CD8-positive, alpha-beta memory T cell (primary cell): ENCODE measurements at regions of chr9 and their contacts with region 1.

Region 1: DNA sequence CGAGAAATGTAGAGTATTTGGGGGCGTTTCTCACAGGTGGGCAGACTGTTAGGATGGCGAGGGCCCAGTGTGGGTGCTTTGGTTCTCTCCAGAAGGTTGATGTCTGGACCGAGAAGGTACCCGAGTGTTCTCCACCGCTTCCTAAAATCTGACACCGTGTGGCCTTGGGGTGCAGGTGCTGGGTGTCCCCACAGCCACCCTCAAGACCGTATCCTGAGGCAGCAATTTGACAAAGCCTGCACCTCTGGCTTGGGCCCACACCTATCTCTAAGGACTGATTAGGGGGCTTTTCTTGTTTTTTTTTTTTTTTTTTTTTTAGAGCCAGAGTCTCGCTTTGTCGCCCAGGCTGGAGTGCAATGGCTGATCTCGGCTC is 1.3 kb downstream of the PPP1R26 start:
- DNase-seq: no peak
- H3K4me3 ChIP-seq: peak overlapping the region; percentile 37
- H3K4me3 Mint-ChIP-seq: peak overlapping the region in 6 of 7 donors; percentile 52 to 75 (median 60)
- H3K27ac ChIP-seq: peak overlapping the region; percentile 47
- H3K27ac Mint-ChIP-seq: no peak overlapping the region
- H3K4me1 ChIP-seq: peaks cover 13% of the 10 kb centered on the region
- H3K4me1 Mint-ChIP-seq: peaks cover 5 to 24% (median 9%) of the 10 kb centered on the region in 3 donors
- H3K27me3 ChIP-seq: peaks cover 20% of the 10 kb centered on the region
- H3K27me3 Mint-ChIP-seq: peaks cover 45 to 48% of the 10 kb centered on the region in 2 donors

Region 2: DNA sequence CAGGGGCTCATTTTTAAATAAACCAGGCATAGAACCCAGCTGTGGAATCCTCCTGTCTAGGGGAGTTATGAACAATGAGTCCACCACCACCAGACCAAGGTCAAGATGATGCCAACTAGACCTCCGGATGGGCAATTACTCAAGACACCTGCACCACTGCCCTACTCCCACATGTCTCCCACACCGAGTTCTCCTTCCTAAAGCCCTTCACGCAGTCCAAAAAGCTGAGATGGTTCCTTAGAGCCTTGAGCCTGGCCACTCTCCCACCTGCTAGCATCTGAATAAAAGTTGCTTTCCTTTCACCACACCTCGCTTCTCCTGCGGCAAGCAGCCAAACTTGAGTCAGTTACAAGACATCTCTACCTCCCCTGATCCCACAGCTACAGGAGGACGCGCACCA is 16.7 kb before region 1 on chr9:
- CTCF ChIA-PET with region 1: interaction called, 4 read pairs
- POLR2A ChIA-PET with region 1: interaction called, 11 read pairs
- DNase-seq: no peak
- H3K4me3 ChIP-seq: no peak overlapping the region
- H3K4me3 Mint-ChIP-seq: no peak overlapping the region
- H3K27ac ChIP-seq: no peak overlapping the region
- H3K27ac Mint-ChIP-seq: no peak overlapping the region
- H3K4me1 ChIP-seq: no peaks in the 10 kb centered on the region
- H3K4me1 Mint-ChIP-seq: peaks cover 6 to 11% (median 8%) of the 10 kb centered on the region in 3 donors
- H3K27me3 ChIP-seq: no peaks in the 10 kb centered on the region
- H3K27me3 Mint-ChIP-seq: peaks cover 20 to 64% of the 10 kb centered on the region in 2 donors